Posterior cingulate gyrus (tissue), 11 donors: ENCODE measurements at regions of chr2 and their contacts with region 1.

Region 1: DNA sequence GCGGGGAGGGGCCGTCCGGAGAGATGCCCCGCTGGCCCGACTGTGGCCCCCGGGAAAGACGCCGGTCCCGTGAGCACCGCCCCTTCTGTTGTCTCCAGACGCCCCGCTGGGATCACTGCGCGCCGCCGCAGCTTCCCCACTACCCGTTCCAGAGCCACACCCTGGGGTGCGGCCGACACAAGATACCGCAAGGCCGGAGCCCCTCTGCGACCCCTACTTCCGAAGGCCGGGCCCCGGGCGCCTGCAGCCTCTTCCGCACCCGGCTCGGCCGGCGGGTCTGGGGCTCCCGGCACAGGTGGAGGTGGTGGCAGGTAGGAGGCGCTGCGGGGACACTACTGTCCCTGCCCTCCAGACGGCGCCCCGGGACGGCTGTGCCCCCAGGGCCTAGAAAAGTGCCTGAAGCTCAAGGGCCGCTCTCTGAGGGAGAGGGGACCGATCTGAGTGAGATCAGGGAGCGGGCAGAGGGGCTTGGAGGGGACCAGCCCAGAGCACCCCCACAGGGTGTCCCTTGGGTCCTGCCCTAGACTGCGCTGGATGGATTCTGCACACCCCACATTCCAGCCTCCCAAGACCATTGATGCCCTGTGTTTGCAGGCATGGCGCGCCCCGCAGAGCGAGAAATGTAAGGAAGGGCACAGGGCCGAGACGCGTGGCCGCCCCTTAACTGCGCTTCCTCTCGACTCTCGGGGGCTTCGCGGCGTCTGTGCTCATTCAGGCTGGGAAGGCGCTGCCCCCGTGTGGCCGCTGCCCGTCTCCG is 80.0 kb downstream of the GFPT1 start:
- DNase-seq: peak; percentile 59 to 97 (median 80)

Region 2: GRCh38 chr2:68943581-68944568 is 363.1 kb before region 1 on chr2:
- intact Hi-C with region 1: loop called (anchors 1 kb)
- DNase-seq: peak in 7 of 10 donors; percentile 8 to 82 (median 52)

Region 3: DNA sequence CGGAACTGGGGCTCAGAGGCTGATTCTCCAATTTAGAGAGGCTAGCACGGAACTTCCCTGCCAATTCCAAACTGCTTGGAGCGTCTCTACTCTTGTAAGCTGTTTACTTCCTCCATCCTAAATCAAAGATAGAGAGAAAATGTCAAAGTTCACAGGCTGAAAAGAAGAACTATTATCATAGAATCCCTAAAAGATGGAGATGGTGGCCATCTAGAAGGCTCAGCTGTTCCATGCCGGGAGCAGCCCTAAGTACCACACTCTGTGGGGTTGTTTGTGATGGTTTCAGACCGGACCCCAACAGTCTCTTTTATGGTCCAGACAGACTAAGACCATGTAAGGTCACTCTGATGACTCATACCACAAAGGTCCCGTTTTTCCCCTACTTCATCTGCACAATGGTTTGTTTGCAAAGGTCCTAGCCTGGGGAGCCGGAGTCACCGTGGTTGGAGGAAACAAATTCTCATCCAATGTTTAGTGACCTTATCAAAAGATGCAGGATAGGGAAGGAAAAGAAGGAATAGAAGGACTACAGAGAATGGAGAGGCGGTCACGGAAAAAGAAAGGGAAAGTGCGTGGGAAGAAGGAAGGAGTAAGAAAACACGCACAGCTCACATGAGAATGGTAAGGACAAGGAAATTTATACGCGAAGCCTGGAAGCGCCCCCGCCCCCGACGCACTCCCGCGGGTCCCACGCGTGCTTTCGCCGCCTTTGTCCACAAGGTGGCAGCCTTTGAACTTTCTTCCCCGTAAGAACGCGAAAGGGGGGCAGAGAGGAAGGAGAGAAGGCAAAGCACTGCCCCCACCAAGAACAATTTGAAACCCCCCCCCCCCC is 294.5 kb before region 1 on chr2:
- intact Hi-C with region 1: loop called (anchors 2 kb)
- DNase-seq: peak; percentile 54 to 93 (median 74)

Region 4: DNA sequence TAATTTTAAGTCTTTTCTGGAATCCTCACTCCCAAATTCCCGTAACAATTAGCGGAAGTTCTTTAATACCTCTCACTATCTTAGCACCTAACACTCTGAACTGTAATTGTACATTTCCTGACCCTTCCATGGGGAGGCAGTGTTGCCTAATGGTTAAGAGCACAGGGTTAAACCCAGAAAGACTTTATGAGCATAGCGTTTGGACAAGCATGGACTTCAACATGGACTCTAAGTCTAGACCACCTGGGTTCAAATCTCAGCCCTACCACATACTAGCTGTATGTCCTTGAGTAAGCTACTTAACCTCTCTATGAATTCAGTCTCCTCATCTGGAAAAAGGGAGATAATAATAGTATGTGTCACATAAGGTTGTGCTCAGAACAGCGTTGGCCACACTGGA is 281.0 kb before region 1 on chr2:
- intact Hi-C with region 1: loop called (anchors 5 kb)
- DNase-seq: no peak

Region 5: GRCh38 chr2:69345434-69345833 is 38.4 kb after region 1 on chr2:
- intact Hi-C with region 1: no loop called
- DNase-seq: no peak